ENCODE measurements at regions of chr13 and their contacts with region 1.

Region 1: GRCh38 chr13:43390619-43391018 is 367.2 kb downstream of the DNAJC15 start:
- DNase-seq: no peak
- H3K4me3 ChIP-seq: no peak overlapping the region
- H3K27ac ChIP-seq: no peak overlapping the region
- H3K4me1 ChIP-seq: no peaks in the 10 kb centered on the region
- H3K27me3 ChIP-seq: no peaks in the 10 kb centered on the region
- CTCF ChIP-seq: no peak
- EP300 ChIP-seq: no peak
- POLR2A ChIP-seq: no peak

Region 2: GRCh38 chr13:43377973-43378372 is 12.6 kb before region 1 on chr13:
- intact Hi-C with region 1: loop called in 1 of 4 experiments (anchors 1 kb)
- DNase-seq: no peak
- H3K4me3 ChIP-seq: no peak overlapping the region
- H3K27ac ChIP-seq: no peak overlapping the region
- H3K4me1 ChIP-seq: no peaks in the 10 kb centered on the region
- H3K27me3 ChIP-seq: no peaks in the 10 kb centered on the region
- CTCF ChIP-seq: no peak
- EP300 ChIP-seq: no peak
- POLR2A ChIP-seq: no peak

Region 3: GRCh38 chr13:43405457-43405856 is 14.8 kb after region 1 on chr13:
- intact Hi-C with region 1: no loop called
- DNase-seq: no peak
- H3K4me3 ChIP-seq: no peak overlapping the region
- H3K27ac ChIP-seq: no peak overlapping the region
- H3K4me1 ChIP-seq: no peaks in the 10 kb centered on the region
- H3K27me3 ChIP-seq: no peaks in the 10 kb centered on the region
- CTCF ChIP-seq: no peak
- EP300 ChIP-seq: no peak
- POLR2A ChIP-seq: no peak

Region 4: DNA sequence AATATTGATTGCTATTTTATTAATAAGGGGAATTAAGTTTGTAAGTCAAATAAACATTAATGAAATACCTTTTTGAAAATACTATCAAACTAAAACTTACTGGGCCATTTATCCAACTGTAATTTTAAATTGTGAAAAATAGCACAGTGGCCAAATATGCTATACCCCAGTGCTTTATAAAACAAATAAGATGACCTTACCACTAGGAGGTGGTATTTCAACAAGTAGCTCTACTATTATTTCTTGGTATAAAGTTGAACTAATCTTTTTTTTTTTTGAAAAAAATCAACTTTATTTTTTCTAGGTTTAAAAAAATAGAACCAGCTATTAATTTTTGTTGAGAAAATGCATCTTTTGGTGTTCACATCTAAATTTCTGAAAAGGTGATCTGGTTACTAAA is 503.8 kb after region 1 on chr13:
- intact Hi-C with region 1: no loop called
- DNase-seq: no peak
- H3K4me3 ChIP-seq: no peak overlapping the region
- H3K27ac ChIP-seq: no peak overlapping the region
- H3K4me1 ChIP-seq: no peaks in the 10 kb centered on the region
- H3K27me3 ChIP-seq: no peaks in the 10 kb centered on the region
- CTCF ChIP-seq: no peak
- EP300 ChIP-seq: no peak
- POLR2A ChIP-seq: no peak